CD4-positive, alpha-beta T cell (primary cell): ENCODE measurements at regions of chr11 and their contacts with region 1.

Region 1: DNA sequence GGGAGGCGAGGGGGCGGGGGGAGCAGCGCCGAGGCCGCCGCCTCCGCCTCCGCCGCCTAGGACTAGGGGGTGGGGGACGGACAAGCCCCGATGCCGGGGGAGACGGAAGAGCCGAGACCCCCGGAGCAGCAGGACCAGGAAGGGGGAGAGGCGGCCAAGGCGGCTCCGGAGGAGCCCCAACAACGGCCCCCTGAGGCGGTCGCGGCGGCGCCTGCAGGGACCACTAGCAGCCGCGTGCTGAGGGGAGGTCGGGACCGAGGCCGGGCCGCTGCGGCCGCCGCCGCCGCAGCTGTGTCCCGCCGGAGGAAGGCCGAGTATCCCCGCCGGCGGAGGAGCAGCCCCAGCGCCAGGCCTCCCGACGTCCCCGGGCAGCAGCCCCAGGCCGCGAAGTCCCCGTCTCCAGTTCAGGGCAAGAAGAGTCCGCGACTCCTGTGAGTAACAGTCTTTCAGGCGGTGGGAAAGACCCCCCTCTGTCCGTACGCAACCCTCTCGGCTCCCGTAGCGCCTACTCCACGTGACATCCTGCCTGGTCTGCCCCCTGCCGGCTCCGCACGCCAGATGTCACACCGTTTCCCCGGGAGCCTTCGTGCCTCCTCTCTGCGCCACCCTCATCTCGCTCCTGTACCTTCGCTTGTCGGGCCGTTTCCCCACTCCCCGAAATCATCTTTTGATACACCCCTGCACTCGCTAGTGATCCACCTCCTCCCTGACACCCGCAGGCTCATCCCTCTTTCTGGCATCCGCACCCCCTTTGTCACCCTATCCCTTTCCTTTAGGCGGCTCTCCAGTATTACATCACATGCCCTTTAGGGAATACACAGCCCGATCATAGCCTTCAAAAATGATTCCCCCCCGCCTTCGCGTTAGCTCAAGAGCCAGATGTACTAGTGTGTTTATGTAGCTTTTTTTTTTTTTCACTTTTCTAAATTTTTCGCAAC is 598 bp downstream of the ZFP91 start:
- DNase-seq: peak; percentile 87 to 97 (median 91)
- ATAC-seq: peak; percentile 37
- H3K4me3 ChIP-seq: peak overlapping the region; percentile 87
- H3K4me3 Mint-ChIP-seq: peak overlapping the region; percentile 99
- H3K27ac ChIP-seq: peak overlapping the region; percentile 90 to 99
- H3K27ac Mint-ChIP-seq: peak overlapping the region; percentile 99
- H3K4me1 ChIP-seq: peaks cover 22% of the 10 kb centered on the region
- H3K4me1 Mint-ChIP-seq: peaks cover 76% of the 10 kb centered on the region
- H3K27me3 ChIP-seq: no peaks in the 10 kb centered on the region
- H3K27me3 Mint-ChIP-seq: no peaks in the 10 kb centered on the region
- CTCF ChIP-seq: peak; percentile 81

Region 2: DNA sequence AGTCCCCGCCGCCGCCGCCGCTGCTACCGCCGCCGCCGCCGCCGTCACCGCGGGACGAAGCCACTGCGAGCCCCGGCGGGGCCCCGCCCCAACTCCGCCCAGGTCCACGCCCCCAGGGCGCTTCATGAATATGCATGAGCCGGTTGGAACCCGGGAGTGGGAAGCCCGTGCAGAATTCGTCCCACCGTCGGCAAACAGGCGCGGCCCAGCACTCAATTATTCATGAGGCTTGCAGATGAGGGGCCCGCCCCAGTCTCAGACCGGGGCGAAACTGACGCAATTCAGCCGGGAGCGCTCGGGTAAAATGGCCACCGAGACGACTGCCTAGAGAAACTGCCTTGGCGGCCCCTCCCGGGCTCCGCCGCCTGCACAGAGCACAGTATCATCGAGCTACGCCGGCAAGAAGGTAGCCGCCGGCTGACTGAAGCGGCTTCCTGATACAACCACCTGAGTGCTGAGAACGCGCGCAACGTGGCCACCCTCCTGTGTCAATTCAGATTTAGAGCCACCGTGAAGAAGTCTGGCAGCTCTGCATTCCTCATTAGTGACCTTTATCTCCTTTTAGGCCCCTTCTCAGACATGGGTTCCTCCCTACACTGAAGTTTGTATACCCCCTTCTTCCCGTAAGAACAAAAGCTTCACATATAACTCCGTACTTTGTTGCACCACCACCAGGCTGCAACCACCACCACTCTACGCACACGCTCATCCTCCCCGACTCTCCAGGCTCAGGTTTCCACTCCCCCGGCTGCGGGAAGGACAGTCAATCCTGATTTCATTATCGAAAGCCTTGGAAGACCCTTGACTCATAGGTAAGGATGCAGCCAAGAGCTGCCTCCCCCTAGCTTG is 1254.4 kb before region 1 on chr11 and contains the start of gene TNKS1BP1:
- CTCF ChIA-PET with region 1: no interaction called
- POLR2A ChIA-PET with region 1: interaction called, 3 read pairs
- intact Hi-C with region 1: loop called (anchors 2 to 10 kb)
- DNase-seq: peak; percentile 76 to 95 (median 87)
- ATAC-seq: peak; percentile 90
- H3K4me3 ChIP-seq: peak within 1 kb of the TSS; percentile 80
- H3K4me3 Mint-ChIP-seq: peak within 1 kb of the TSS; percentile 93
- H3K27ac ChIP-seq: peak within 1 kb of the TSS; percentile 82 to 84
- H3K27ac Mint-ChIP-seq: peak within 1 kb of the TSS; percentile 95
- H3K4me1 ChIP-seq: peaks cover 30% of the 10 kb centered on the region
- H3K4me1 Mint-ChIP-seq: peaks cover 45% of the 10 kb centered on the region
- H3K27me3 ChIP-seq: no peaks in the 10 kb centered on the region
- H3K27me3 Mint-ChIP-seq: no peaks in the 10 kb centered on the region
- CTCF ChIP-seq: no peak
- total RNA-seq, gene TNKS1BP1: 12.9 to 13.2 TPM

Region 3: DNA sequence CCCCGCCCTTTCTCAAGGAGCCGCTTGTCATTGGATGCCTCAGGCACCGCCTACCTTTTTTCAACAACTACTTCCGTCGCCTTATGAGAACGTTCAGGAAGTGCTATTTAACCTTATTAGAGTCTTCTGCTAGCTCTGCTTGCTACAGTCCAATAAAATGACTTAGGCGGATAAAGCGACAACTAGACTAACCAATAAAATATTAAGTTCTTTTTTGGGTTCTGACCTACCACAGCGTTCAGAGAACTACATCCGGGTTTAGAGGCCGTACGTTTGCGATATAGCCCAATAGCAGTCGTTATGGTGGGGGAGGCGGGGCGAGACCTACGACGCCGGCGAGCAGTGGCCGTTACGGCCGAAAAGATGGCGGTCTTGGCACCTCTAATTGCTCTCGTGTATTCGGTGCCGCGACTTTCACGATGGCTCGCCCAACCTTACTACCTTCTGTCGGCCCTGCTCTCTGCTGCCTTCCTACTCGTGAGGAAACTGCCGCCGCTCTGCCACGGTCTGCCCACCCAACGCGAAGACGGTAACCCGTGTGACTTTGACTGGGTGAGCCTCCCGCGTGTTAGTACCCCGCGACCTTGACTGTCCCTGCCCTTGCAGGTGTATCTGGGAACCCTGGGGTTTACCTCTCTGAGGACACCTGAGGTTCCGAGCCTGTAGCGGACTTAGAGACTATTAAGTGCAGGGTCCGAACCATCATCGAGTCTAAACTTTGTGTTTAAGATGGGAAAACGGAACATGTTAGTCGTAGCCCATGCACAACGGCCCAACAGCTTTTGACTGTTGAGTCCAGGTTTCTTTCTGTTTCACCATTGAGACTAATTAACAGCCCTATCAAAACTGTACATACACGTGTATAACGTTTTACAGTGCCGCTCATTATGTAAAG is 867.0 kb before region 1 on chr11 and contains the start of gene TMX2:
- CTCF ChIA-PET with region 1: no interaction called
- POLR2A ChIA-PET with region 1: interaction called, 3 read pairs
- intact Hi-C with region 1: loop called (anchors 5 to 10 kb)
- DNase-seq: peak; percentile 79 to 97 (median 84)
- ATAC-seq: peak; percentile 89
- H3K4me3 ChIP-seq: peak within 1 kb of the TSS; percentile 95
- H3K4me3 Mint-ChIP-seq: peak within 1 kb of the TSS; percentile 96
- H3K27ac ChIP-seq: peak within 1 kb of the TSS; percentile 85 to 95
- H3K27ac Mint-ChIP-seq: peak within 1 kb of the TSS; percentile 88
- H3K4me1 ChIP-seq: peaks cover 30% of the 10 kb centered on the region
- H3K4me1 Mint-ChIP-seq: peaks cover 53% of the 10 kb centered on the region
- H3K27me3 ChIP-seq: no peaks in the 10 kb centered on the region
- H3K27me3 Mint-ChIP-seq: no peaks in the 10 kb centered on the region
- CTCF ChIP-seq: no peak
- total RNA-seq, gene TMX2: 30.0 to 30.5 TPM

Region 4: DNA sequence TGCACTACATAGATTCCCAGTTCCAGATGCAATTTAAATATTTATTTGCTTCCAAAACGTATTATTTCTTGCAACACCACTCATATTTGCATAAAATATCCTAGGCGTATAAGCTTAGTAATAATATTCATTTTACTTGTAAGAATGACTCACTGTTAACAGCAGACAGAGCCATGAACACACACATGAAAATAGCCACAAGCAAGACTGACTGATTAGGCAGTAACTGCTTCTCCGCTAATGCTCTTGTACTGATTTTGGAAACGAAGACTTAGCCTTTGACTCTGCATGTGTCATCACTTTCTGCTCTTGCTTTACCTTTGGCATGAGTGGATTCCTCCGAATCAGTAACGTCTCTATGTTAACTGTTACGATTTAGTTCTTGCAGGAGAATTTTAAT is 356.7 kb before region 1 on chr11:
- CTCF ChIA-PET with region 1: no interaction called
- POLR2A ChIA-PET with region 1: no interaction called
- intact Hi-C with region 1: no loop called
- DNase-seq: no peak
- ATAC-seq: no peak
- H3K4me3 ChIP-seq: no peak overlapping the region
- H3K4me3 Mint-ChIP-seq: no peak overlapping the region
- H3K27ac ChIP-seq: no peak overlapping the region
- H3K27ac Mint-ChIP-seq: no peak overlapping the region
- H3K4me1 ChIP-seq: no peaks in the 10 kb centered on the region
- H3K4me1 Mint-ChIP-seq: no peaks in the 10 kb centered on the region
- H3K27me3 ChIP-seq: no peaks in the 10 kb centered on the region
- H3K27me3 Mint-ChIP-seq: peaks cover 19% of the 10 kb centered on the region
- CTCF ChIP-seq: no peak

Region 5: DNA sequence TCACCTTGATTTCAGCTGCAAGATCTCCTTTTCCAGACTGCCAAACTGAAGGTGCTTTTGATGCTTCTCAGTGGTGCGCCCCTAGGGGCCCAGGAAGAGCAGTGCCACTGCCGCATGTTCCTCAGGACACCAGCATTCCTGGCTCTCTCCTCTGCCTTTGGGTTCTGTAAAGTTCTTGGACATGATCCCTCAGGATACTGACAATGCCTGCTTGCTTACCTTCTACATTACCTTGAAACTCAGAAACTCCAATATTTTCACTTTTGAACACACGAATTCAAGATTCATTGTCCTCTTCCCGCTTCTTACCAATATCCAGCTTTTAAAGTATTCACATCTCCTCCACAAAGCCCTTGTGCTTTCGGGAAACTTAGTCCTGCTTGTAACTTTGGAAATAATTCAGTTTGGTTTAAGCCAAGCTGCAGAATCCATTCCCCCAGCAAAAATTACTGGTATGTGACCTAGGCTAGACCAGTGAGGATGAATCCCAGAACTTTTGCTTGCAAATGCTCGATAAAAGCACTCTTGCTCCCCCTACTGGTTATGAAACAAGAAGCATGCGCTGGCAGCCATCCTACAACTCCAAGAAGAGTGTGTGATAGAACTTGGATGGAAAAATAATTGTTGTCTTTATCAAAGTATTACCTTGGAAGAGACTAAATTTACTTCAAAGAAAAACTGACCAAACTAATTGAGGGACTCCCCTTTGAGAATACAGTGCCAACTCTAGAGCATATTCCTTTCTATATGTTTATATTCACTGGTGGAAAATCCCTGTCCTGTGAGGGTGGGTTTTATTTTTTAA is 55.0 kb before region 1 on chr11:
- CTCF ChIA-PET with region 1: interaction called, 5 read pairs
- POLR2A ChIA-PET with region 1: interaction called, 60 read pairs
- intact Hi-C with region 1: loop called in 1 of 2 experiments (anchors 1 kb)
- DNase-seq: peak in 13 of 14 experiments; percentile 16 to 84 (median 35)
- ATAC-seq: peak; percentile 65
- H3K4me3 ChIP-seq: peak overlapping the region; percentile 39
- H3K4me3 Mint-ChIP-seq: peak overlapping the region; percentile 63
- H3K27ac ChIP-seq: peak overlapping the region; percentile 50 to 83
- H3K27ac Mint-ChIP-seq: peak overlapping the region; percentile 95
- H3K4me1 ChIP-seq: peaks cover 17% of the 10 kb centered on the region
- H3K4me1 Mint-ChIP-seq: peaks cover 78% of the 10 kb centered on the region
- H3K27me3 ChIP-seq: no peaks in the 10 kb centered on the region
- H3K27me3 Mint-ChIP-seq: no peaks in the 10 kb centered on the region
- CTCF ChIP-seq: peak; percentile 93

Region 6: DNA sequence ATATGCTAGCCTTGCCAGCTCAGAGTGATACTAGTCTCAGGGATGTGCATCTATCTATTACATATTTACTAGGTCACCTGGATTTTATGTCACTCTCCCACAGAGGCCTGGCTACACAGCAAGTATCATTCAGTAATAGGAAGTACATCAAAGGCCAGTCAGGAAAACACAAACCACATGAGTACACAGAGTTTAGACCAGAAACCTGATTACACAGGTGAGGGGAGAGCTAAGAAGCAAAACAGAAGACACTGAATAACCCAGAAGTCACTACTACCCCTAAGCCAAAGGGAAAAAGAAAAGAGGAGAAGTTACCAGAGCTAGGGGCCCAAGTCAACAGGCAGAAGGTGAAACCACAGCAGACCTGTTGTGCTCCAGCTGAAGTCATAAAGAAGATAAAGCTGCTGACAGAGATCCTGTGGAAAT is 17.1 kb before region 1 on chr11:
- CTCF ChIA-PET with region 1: interaction called, 53 read pairs
- POLR2A ChIA-PET with region 1: interaction called, 108 read pairs
- intact Hi-C with region 1: loop called in 1 of 2 experiments (anchors 2 kb)
- DNase-seq: peak in 3 of 14 experiments; percentile 32 to 47 (median 34)
- ATAC-seq: peak; percentile 59
- H3K4me3 ChIP-seq: no peak overlapping the region
- H3K4me3 Mint-ChIP-seq: peak overlapping the region; percentile 8
- H3K27ac ChIP-seq: peak overlapping the region in 1 of 2 donors; percentile 11
- H3K27ac Mint-ChIP-seq: peak overlapping the region; percentile 76
- H3K4me1 ChIP-seq: peaks cover 32% of the 10 kb centered on the region
- H3K4me1 Mint-ChIP-seq: peaks cover 72% of the 10 kb centered on the region
- H3K27me3 ChIP-seq: no peaks in the 10 kb centered on the region
- H3K27me3 Mint-ChIP-seq: no peaks in the 10 kb centered on the region
- CTCF ChIP-seq: no peak

Region 7: GRCh38 chr11:58640386-58641023 is 61.0 kb after region 1 on chr11:
- CTCF ChIA-PET with region 1: no interaction called
- POLR2A ChIA-PET with region 1: interaction called, 13 read pairs
- intact Hi-C with region 1: no loop called
- DNase-seq: peak in 5 of 14 experiments; percentile 6 to 66 (median 32)
- ATAC-seq: peak; percentile 76
- H3K4me3 ChIP-seq: no peak overlapping the region
- H3K4me3 Mint-ChIP-seq: peak overlapping the region; percentile 27
- H3K27ac ChIP-seq: peak overlapping the region; percentile 8 to 27
- H3K27ac Mint-ChIP-seq: peak overlapping the region; percentile 74
- H3K4me1 ChIP-seq: peaks cover 15% of the 10 kb centered on the region
- H3K4me1 Mint-ChIP-seq: peaks cover 32% of the 10 kb centered on the region
- H3K27me3 ChIP-seq: no peaks in the 10 kb centered on the region
- H3K27me3 Mint-ChIP-seq: no peaks in the 10 kb centered on the region
- CTCF ChIP-seq: no peak

Region 8: DNA sequence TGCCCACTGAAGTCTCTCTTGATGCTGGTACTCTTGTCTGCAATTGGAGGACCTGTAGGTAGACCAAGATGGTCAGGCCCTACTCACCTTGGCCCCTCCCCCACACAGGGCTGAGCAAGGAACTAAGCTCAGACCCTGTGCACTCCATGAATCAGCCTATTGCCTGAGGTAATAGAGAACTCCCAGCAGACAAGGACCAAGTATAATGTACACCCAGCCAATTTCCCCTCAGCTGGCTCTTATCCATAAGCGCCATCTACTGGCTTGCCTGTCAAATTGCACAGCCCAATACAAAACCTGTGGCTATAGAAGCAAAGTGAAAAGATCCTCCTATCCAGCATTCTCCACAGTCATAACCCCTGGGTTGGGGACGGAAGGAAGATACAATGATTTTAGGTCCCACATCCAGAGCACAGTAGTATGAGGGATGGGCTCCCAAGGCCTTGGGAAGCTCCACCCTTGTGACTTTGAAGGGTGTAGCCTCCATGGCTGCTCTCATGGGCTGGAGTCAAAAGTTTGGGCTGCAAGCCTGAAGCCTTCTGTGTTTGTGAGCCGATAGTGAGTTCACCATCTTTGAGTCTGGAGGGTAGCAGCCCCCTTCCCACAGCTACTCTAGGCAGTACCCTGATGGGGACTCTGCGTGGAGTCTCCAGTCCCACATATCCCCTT is 209.0 kb after region 1 on chr11:
- CTCF ChIA-PET with region 1: no interaction called
- POLR2A ChIA-PET with region 1: interaction called, 4 read pairs
- intact Hi-C with region 1: loop called in 1 of 2 experiments (anchors 5 kb)
- DNase-seq: peak; percentile 4 to 71 (median 24)
- ATAC-seq: peak; percentile 95
- H3K4me3 ChIP-seq: no peak overlapping the region
- H3K4me3 Mint-ChIP-seq: no peak overlapping the region
- H3K27ac ChIP-seq: no peak overlapping the region
- H3K27ac Mint-ChIP-seq: no peak overlapping the region
- H3K4me1 ChIP-seq: no peaks in the 10 kb centered on the region
- H3K4me1 Mint-ChIP-seq: no peaks in the 10 kb centered on the region
- H3K27me3 ChIP-seq: no peaks in the 10 kb centered on the region
- H3K27me3 Mint-ChIP-seq: peaks cover 7% of the 10 kb centered on the region
- CTCF ChIP-seq: peak; percentile 90

Region 9: GRCh38 chr11:58856806-58857205 is 277.3 kb after region 1 on chr11:
- CTCF ChIA-PET with region 1: no interaction called
- POLR2A ChIA-PET with region 1: no interaction called
- intact Hi-C with region 1: no loop called
- DNase-seq: no peak
- ATAC-seq: no peak
- H3K4me3 ChIP-seq: no peak overlapping the region
- H3K4me3 Mint-ChIP-seq: no peak overlapping the region
- H3K27ac ChIP-seq: no peak overlapping the region
- H3K27ac Mint-ChIP-seq: no peak overlapping the region
- H3K4me1 ChIP-seq: no peaks in the 10 kb centered on the region
- H3K4me1 Mint-ChIP-seq: no peaks in the 10 kb centered on the region
- H3K27me3 ChIP-seq: no peaks in the 10 kb centered on the region
- H3K27me3 Mint-ChIP-seq: no peaks in the 10 kb centered on the region
- CTCF ChIP-seq: no peak